Activated CD4-positive, alpha-beta T cell treated with anti-CD3 and anti-CD28 coated beads for 36 hours (primary cell): ENCODE measurements at regions of chr1 and their contacts with region 1.

Region 1: DNA sequence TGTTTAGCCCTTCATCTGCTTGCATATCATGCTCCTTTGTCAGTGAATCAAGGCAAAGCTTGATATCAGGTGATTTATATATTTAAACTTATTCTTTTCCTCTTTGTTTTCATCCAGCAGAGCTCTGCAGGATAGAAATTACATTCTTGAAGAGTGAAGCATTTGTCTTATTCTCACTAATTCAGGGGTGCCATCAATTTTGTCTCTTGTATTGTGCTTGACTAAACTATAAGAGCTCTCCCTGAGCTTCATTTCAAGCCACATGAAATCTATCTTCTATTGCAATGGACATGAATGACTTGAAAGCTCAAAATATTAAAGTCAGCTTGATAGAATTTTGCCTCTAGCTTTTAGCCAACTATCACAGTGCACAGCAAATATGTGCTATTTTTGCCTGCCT is 236.7 kb upstream of the KCTD3 start:
- DNase-seq: no peak
- ATAC-seq: no peak
- H3K4me3 Mint-ChIP-seq: no peak overlapping the region
- H3K27ac Mint-ChIP-seq: no peak overlapping the region
- H3K4me1 Mint-ChIP-seq: no peaks in the 10 kb centered on the region
- H3K27me3 Mint-ChIP-seq: no peaks in the 10 kb centered on the region

Region 2: DNA sequence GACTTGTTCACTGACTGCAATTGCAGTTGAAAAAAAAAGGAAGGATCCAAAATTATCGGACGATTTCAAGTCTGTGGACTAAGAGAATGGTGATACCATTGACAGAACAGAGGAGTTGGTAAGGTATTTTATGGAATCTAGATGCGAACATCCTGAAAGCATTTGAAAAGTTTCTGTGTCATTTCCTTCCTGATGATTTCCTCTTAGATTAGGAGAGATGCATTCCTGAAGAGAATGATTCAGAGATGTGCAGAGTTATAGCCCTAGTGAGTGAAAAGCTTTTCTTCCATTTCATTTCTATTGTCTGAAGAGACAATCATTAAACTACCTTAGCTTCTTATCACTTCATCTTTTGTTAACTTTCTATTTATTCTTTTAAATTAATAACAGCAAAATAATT is 47.9 kb before region 1 on chr1:
- CTCF ChIA-PET with region 1: no interaction called
- POLR2A ChIA-PET with region 1: no interaction called
- intact Hi-C with region 1: loop called in 1 of 2 experiments (anchors 1 kb)
- DNase-seq: no peak
- ATAC-seq: no peak
- H3K4me3 Mint-ChIP-seq: no peak overlapping the region
- H3K27ac Mint-ChIP-seq: no peak overlapping the region
- H3K4me1 Mint-ChIP-seq: no peaks in the 10 kb centered on the region
- H3K27me3 Mint-ChIP-seq: no peaks in the 10 kb centered on the region

Region 3: DNA sequence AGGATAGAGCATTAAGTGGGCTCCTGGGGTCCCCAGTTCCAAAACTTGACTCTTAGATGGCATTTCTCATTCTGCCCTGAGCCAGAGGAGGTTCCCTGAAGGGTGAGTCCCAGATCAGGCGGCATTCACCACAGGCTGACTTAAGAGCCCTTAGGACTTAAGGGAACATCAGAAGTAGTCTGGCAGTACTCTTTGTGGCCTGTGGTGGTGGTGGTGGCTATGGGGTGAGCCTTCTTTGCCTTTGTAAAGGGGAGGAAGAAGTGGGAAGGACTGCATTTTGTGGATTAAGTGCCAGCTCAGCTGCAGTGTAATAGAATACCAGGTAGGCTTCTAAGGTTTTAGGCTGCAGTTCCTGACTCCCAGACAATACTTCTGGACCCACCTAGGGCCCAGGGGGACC is 50.1 kb after region 1 on chr1:
- CTCF ChIA-PET with region 1: no interaction called
- POLR2A ChIA-PET with region 1: no interaction called
- intact Hi-C with region 1: no loop called
- DNase-seq: no peak
- ATAC-seq: no peak
- H3K4me3 Mint-ChIP-seq: no peak overlapping the region
- H3K27ac Mint-ChIP-seq: no peak overlapping the region
- H3K4me1 Mint-ChIP-seq: no peaks in the 10 kb centered on the region
- H3K27me3 Mint-ChIP-seq: no peaks in the 10 kb centered on the region

Region 4: GRCh38 chr1:216270086-216270773 is 939.8 kb after region 1 on chr1:
- CTCF ChIA-PET with region 1: no interaction called
- POLR2A ChIA-PET with region 1: no interaction called
- intact Hi-C with region 1: no loop called
- DNase-seq: no peak
- ATAC-seq: no peak
- H3K4me3 Mint-ChIP-seq: no peak overlapping the region
- H3K27ac Mint-ChIP-seq: no peak overlapping the region
- H3K4me1 Mint-ChIP-seq: no peaks in the 10 kb centered on the region
- H3K27me3 Mint-ChIP-seq: no peaks in the 10 kb centered on the region